B cell (primary cell): ENCODE measurements at regions of chr13 and their contacts with region 1.

Region 1: DNA sequence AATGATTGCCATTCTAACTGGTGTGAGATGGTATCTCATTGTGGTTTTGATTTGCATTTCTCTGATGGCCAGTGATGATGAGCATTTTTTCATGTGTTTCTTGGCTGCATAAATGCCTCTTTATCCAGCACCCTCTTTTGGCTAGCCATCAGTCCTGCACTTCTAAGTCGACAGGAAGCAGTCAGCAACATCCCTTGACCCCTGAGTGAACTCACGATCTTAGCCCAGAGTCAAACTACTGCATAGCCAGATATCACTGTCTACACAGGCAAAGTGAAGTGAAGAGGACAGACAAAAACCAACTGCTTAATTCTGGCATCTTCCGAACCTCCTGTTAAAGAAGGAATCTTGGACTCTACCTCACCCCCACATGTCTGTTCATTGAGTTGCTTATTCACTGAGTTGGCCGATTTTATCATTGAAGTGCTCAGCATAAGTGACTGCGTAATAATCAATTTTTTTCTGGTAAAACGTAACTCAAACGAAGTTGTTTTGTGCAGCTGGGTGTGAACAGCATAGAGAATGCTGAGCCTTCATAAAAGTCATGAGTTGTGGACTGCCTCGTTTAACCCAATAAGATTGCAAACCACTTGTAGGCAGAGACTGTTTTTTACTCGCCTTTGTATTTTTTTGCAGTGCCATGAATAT is 304.2 kb downstream of the COG6 start:
- DNase-seq: no peak
- ATAC-seq: no peak
- H3K4me3 ChIP-seq: no peak overlapping the region
- H3K4me3 Mint-ChIP-seq: no peak overlapping the region
- H3K27ac ChIP-seq: no peak overlapping the region
- H3K27ac Mint-ChIP-seq: no peak overlapping the region
- H3K4me1 ChIP-seq: peaks cover 10 to 17% of the 10 kb centered on the region in 2 donors
- H3K4me1 Mint-ChIP-seq: peaks cover 24% of the 10 kb centered on the region
- H3K27me3 ChIP-seq: no peaks in the 10 kb centered on the region
- H3K27me3 Mint-ChIP-seq: no peaks in the 10 kb centered on the region
- CTCF ChIP-seq: no peak

Region 2: GRCh38 chr13:39876258-39876657 is 83.4 kb before region 1 on chr13:
- CTCF ChIA-PET with region 1: no interaction called
- POLR2A ChIA-PET with region 1: no interaction called
- intact Hi-C with region 1: no loop called
- DNase-seq: no peak
- ATAC-seq: no peak
- H3K4me3 ChIP-seq: no peak overlapping the region
- H3K4me3 Mint-ChIP-seq: no peak overlapping the region
- H3K27ac ChIP-seq: no peak overlapping the region
- H3K27ac Mint-ChIP-seq: no peak overlapping the region
- H3K4me1 ChIP-seq: no peaks in the 10 kb centered on the region
- H3K4me1 Mint-ChIP-seq: no peaks in the 10 kb centered on the region
- H3K27me3 ChIP-seq: no peaks in the 10 kb centered on the region
- H3K27me3 Mint-ChIP-seq: peaks cover 12% of the 10 kb centered on the region
- CTCF ChIP-seq: no peak

Region 3: DNA sequence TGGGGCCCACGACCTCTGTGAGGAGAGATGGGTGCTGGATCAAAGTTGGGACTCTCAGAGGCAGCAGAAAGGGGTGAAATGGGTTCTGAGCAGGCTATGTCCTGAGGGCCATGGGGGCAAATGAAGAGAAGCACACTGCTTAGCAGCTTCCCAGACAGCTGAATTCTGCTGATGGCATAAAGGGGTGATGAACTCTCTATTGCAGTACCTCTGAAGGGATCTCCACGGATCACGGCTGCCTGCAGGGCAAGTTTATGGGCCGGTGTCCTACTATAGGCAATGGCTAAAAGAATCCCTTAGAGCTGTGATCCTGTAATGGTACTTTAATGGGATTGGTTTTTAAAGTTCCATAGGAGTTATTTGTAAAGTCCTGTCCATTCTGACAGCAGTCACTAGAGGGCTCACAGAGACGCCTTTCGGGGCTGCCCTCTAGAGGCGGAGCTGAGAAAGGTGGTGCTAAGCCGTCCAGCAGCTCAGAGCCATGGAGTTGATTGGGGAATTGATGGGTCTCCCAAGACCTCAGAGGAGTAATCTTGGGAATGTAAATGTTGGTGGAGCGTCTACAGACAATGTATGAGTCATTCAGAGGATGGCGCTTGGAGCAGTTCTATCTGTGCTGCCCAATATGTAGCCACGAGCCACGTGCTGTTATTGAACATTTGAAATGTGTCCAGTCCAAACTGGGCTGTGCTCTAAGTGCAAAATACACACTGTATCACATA is 16.9 kb before region 1 on chr13:
- CTCF ChIA-PET with region 1: interaction called, 24 read pairs
- POLR2A ChIA-PET with region 1: no interaction called
- intact Hi-C with region 1: no loop called
- DNase-seq: peak; percentile 75
- ATAC-seq: peak; percentile 99
- H3K4me3 ChIP-seq: no peak overlapping the region
- H3K4me3 Mint-ChIP-seq: no peak overlapping the region
- H3K27ac ChIP-seq: no peak overlapping the region
- H3K27ac Mint-ChIP-seq: no peak overlapping the region
- H3K4me1 ChIP-seq: peaks cover 0 to 2% of the 10 kb centered on the region in 2 donors
- H3K4me1 Mint-ChIP-seq: peaks cover 1% of the 10 kb centered on the region
- H3K27me3 ChIP-seq: peaks cover 0 to 4% (median 0%) of the 10 kb centered on the region in 4 experiments
- H3K27me3 Mint-ChIP-seq: peaks cover 4% of the 10 kb centered on the region
- CTCF ChIP-seq: peak; percentile 98

Region 4: DNA sequence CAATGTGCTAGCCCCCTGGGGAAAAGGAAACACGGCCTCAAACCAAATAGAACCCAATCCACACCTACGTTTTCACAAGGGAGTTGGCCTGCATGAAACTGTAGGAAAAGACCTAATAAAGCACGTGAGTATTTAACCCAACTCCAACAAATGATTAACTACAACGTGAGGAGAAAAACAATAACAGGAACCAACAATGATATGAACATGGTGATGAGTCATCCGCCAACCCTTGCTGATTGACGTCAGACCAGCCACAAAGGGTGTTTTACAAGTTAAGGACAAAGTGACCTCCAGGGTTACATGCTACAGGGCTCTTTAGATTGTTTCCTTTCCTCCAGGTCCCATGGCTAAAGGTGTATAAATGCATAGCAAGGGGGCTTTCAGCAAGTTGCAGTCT is 156.4 kb after region 1 on chr13:
- CTCF ChIA-PET with region 1: no interaction called
- POLR2A ChIA-PET with region 1: no interaction called
- intact Hi-C with region 1: no loop called
- DNase-seq: no peak
- ATAC-seq: peak; percentile 78
- H3K4me3 ChIP-seq: no peak overlapping the region
- H3K4me3 Mint-ChIP-seq: peak overlapping the region; percentile 58
- H3K27ac ChIP-seq: no peak overlapping the region
- H3K27ac Mint-ChIP-seq: peak overlapping the region; percentile 72
- H3K4me1 ChIP-seq: peaks cover 9 to 10% of the 10 kb centered on the region in 2 donors
- H3K4me1 Mint-ChIP-seq: peaks cover 28% of the 10 kb centered on the region
- H3K27me3 ChIP-seq: no peaks in the 10 kb centered on the region
- H3K27me3 Mint-ChIP-seq: no peaks in the 10 kb centered on the region
- CTCF ChIP-seq: no peak